Ovary (tissue), 10 donors: ENCODE measurements at regions of chr2 and their contacts with region 1.

Region 1: DNA sequence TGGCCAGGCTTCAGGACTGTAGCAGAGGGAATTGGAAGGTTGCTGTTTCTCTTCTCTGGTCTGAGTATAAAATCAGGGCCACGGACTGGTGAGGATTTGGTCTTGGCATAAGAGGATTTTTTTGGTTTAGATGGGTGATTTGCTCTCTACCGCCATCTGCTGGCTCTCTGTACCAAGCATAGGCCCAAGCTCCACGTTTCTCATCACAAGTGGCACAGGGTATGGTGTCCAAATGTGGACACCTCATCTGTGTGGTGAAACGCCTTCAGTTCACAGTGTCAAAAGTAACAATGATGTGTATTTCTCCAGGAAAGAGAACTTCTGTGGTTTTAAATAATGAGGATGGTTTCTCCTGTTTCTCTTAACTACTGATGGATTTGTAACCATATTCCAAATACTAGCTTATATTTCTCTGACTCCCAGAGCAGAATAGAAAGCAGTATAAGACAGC is 115.1 kb downstream of the EML6 start:
- DNase-seq: peak; percentile 47 to 70 (median 60)
- H3K4me3 ChIP-seq: no peak overlapping the region
- H3K27ac ChIP-seq: no peak overlapping the region
- H3K4me1 ChIP-seq: no peaks in the 10 kb centered on the region
- H3K27me3 ChIP-seq: no peaks in the 10 kb centered on the region
- CTCF ChIP-seq: peak; percentile 46 to 55 (median 48)
- EP300 ChIP-seq: no peak
- POLR2A ChIP-seq: no peak

Region 2: GRCh38 chr2:54106631-54107454 is 731.8 kb before region 1 on chr2:
- intact Hi-C with region 1: loop called in 1 of 4 experiments (anchors 10 kb)
- DNase-seq: peak in 2 of 5 donors; percentile 30 to 32
- H3K4me3 ChIP-seq: no peak overlapping the region
- H3K27ac ChIP-seq: no peak overlapping the region
- H3K4me1 ChIP-seq: no peaks in the 10 kb centered on the region
- H3K27me3 ChIP-seq: no peaks in the 10 kb centered on the region
- CTCF ChIP-seq: peak in 2 of 3 donors; percentile 54 to 57
- EP300 ChIP-seq: no peak
- POLR2A ChIP-seq: no peak

Region 3: DNA sequence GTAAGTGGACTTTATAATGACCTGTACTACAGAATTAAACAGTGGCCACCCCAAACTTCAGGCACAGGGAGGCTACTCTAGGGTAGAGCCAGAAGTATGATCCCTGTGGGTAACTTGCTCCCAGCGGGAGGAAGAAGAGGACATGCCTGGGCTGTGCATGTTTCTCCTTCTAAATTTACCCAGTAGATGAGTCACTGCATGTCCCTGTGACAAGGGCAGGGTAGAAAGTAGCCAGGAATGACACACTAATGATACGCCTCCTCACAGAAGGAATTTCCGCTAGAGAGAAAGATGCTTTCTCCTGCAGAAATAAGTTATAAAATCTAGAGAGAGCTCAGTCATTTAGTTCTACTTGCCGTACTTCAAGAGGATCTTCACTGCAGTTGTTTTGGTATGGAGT is 715.7 kb before region 1 on chr2:
- intact Hi-C with region 1: loop called in 1 of 4 experiments (anchors 10 kb)
- DNase-seq: no peak
- H3K4me3 ChIP-seq: no peak overlapping the region
- H3K27ac ChIP-seq: no peak overlapping the region
- H3K4me1 ChIP-seq: no peaks in the 10 kb centered on the region
- H3K27me3 ChIP-seq: no peaks in the 10 kb centered on the region
- CTCF ChIP-seq: no peak
- EP300 ChIP-seq: no peak
- POLR2A ChIP-seq: no peak

Region 4: GRCh38 chr2:54665436-54665856 is 173.2 kb before region 1 on chr2:
- intact Hi-C with region 1: no loop called
- DNase-seq: peak in 3 of 5 donors; percentile 52 to 74 (median 58)
- H3K4me3 ChIP-seq: no peak overlapping the region
- H3K27ac ChIP-seq: peak overlapping the region in 1 of 2 donors; percentile 77
- H3K4me1 ChIP-seq: peaks cover 21% of the 10 kb centered on the region
- H3K27me3 ChIP-seq: no peaks in the 10 kb centered on the region
- CTCF ChIP-seq: peak in 2 of 3 donors; percentile 47 to 55
- EP300 ChIP-seq: no peak
- POLR2A ChIP-seq: no peak

Region 5: DNA sequence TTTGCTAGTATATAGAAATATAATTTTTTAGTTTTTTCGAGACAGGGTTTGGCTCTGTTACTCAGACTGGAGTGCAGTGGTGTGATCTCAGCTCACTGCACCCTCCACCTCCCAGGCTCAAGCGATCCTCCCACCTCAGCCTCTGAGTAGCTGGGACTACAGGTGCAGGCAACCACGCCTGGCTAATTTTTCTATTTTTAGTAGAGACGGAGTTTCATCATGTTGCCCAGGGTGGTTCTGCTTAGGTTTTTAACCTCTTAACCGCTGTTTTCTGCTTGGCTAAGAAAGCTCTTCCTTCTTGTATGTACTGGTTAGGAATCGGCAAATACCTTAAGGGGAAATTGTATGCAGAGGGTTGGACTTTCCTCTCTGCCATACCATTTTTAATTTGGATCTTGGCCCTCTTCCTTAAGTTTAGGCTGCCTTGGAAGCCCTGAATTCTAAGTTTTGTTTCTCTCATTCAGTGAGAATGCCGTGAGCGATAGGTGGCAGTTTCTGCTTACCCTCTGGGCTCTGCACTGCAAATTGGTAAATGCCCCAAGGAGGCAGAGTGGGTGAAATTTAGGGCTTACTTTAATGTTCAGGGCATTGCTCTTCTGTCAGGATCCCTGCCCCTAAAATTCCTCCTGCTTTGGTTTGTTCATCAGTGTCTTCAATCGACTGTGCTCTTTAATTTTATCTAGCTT is 82.8 kb before region 1 on chr2:
- intact Hi-C with region 1: no loop called
- DNase-seq: no peak
- H3K4me3 ChIP-seq: no peak overlapping the region
- H3K27ac ChIP-seq: no peak overlapping the region
- H3K4me1 ChIP-seq: no peaks in the 10 kb centered on the region
- H3K27me3 ChIP-seq: no peaks in the 10 kb centered on the region
- CTCF ChIP-seq: no peak
- EP300 ChIP-seq: no peak
- POLR2A ChIP-seq: no peak